ENCODE measurements at regions of chr9 and their contacts with region 1.

Region 1: GRCh38 chr9:137188490-137189296 is at the starts of genes ANAPC2 and SSNA1:
- H3K4me3 ChIP-seq: peak within 1 kb of the TSS; percentile 92
- H3K27ac ChIP-seq: peak within 1 kb of the TSS; percentile 92
- H3K4me1 ChIP-seq: peaks cover 11% of the 10 kb centered on the region
- CTCF ChIP-seq: peak; percentile 100

Region 2: DNA sequence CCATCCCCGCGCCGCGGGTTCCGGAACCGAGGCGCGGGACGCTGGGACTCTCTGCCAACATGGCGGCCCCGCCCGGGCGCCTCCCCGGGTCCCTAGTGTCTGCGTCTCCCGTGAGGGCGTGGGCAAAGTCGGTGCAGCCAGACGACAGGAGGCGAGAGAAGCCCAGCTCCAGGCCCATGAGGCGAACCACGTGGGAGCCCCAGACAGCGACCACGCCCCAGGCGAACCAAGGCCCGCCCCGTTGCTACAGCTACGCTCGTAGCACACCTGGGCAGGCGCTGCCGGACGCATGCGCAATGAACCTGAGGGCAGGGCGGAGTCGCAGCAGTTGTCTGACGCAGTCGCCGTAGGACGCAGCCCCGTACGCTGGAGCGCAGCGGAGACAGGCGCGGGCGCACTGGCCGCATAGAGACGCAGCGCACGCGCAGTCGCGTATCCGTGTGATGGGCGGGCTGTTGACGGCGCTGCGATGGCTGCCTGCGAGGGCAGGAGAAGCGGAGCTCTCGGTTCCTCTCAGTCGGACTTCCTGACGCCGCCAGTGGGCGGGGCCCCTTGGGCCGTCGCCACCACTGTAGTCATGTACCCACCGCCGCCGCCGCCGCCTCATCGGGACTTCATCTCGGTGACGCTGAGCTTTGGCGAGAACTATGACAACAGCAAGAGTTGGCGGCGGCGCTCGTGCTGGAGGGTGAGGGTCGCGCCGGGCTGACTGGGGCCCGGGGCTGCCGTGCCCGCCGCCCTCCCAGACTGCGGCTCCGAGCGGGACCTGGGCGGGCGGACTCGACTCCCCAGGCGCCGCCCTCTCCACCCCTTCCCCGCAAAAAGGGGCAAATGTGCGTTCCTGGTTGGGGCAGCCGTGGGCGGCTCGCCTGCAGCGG is 101.9 kb before region 1 on chr9 and contains the start of gene MAN1B1:
- CTCF ChIA-PET with region 1: no interaction called
- POLR2A ChIA-PET with region 1: interaction called, 10 read pairs
- H3K4me3 ChIP-seq: peak within 1 kb of the TSS; percentile 57
- H3K27ac ChIP-seq: peak within 1 kb of the TSS; percentile 70
- H3K4me1 ChIP-seq: 0 out of 2 replicates have a peak, but pooled peaks cover 3% of the 10 kb centered on the region
- CTCF ChIP-seq: no peak

Region 3: DNA sequence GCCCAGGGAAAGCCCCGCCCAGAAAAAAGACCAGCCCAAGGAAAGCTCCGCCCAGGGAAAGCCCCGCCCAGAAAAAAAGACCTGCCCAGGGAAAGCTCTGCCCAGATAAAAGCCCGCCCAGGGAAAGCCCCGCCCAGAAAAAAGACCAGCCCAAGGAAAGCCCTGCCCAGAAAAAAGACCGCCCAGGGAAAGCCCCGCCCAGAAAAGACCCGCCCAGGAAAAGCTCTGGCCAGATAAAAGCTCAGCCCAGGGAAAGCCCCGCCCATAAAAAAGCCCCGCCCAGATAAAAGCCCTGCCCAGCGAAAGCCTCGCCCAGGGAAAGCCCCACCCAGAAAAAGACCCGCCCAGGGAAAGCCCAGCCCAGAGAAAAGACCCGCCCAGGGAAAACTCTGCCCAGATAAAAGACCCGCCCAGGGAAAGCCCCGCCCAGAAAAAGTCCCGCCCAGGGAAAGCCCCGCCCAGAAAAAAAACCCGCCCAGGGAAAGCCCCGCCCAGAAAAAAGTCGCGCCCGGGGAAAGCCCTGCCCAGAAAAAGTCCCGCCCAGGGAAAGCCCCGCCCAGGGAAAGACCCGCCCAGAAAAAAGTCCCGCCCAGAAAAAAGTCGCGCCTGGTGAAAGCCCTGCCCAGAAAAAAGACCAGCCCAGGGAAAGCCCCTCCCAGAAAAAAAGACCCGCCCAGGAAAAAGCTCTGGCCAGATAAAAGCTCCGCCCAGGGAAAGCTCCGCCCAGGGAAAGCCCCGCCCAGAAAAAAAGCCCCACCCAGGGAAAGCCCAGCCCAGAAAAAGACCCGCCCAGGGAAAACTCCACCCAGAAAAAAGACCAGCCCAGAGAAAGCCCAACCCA is 37.9 kb before region 1 on chr9:
- CTCF ChIA-PET with region 1: no interaction called
- POLR2A ChIA-PET with region 1: interaction called, 14 read pairs
- H3K4me3 ChIP-seq: no peak overlapping the region
- H3K27ac ChIP-seq: no peak overlapping the region
- H3K4me1 ChIP-seq: no peaks in the 10 kb centered on the region
- CTCF ChIP-seq: no peak

Region 4: GRCh38 chr9:137168905-137169856 is 19.5 kb before region 1 on chr9:
- CTCF ChIA-PET with region 1: interaction called, 4 read pairs
- POLR2A ChIA-PET with region 1: interaction called, 40 read pairs
- H3K4me3 ChIP-seq: peak overlapping the region; percentile 40
- H3K27ac ChIP-seq: no peak overlapping the region; the same call in 1 of the 2 replicates
- H3K4me1 ChIP-seq: no peaks in the 10 kb centered on the region; the same call in 1 of the 2 replicates
- CTCF ChIP-seq: peak; percentile 64

Region 5: GRCh38 chr9:137176302-137177182 is 12.2 kb before region 1 on chr9:
- CTCF ChIA-PET with region 1: interaction called, 15 read pairs
- POLR2A ChIA-PET with region 1: interaction called, 20 read pairs
- H3K4me3 ChIP-seq: no peak overlapping the region
- H3K27ac ChIP-seq: no peak overlapping the region
- H3K4me1 ChIP-seq: no peaks in the 10 kb centered on the region
- CTCF ChIP-seq: peak; percentile 64

Region 6: GRCh38 chr9:137200311-137201204 is 11.9 kb after region 1 on chr9 and contains the start of gene TPRN:
- CTCF ChIA-PET with region 1: interaction called, 22 read pairs
- POLR2A ChIA-PET with region 1: interaction called, 178 read pairs
- H3K4me3 ChIP-seq: peak within 1 kb of the TSS; percentile 86
- H3K27ac ChIP-seq: peak within 1 kb of the TSS; percentile 57; the same call in 1 of the 2 replicates
- H3K4me1 ChIP-seq: peaks cover 9% of the 10 kb centered on the region
- CTCF ChIP-seq: no peak

Region 7: GRCh38 chr9:137326445-137327065 is 137.9 kb after region 1 on chr9:
- CTCF ChIA-PET with region 1: no interaction called
- POLR2A ChIA-PET with region 1: no interaction called
- H3K4me3 ChIP-seq: no peak overlapping the region
- H3K27ac ChIP-seq: no peak overlapping the region
- H3K4me1 ChIP-seq: no peaks in the 10 kb centered on the region
- CTCF ChIP-seq: no peak